Dorsolateral prefrontal cortex (tissue), 120 donors: ENCODE measurements at regions of chr16 and their contacts with region 1.

Region 1: DNA sequence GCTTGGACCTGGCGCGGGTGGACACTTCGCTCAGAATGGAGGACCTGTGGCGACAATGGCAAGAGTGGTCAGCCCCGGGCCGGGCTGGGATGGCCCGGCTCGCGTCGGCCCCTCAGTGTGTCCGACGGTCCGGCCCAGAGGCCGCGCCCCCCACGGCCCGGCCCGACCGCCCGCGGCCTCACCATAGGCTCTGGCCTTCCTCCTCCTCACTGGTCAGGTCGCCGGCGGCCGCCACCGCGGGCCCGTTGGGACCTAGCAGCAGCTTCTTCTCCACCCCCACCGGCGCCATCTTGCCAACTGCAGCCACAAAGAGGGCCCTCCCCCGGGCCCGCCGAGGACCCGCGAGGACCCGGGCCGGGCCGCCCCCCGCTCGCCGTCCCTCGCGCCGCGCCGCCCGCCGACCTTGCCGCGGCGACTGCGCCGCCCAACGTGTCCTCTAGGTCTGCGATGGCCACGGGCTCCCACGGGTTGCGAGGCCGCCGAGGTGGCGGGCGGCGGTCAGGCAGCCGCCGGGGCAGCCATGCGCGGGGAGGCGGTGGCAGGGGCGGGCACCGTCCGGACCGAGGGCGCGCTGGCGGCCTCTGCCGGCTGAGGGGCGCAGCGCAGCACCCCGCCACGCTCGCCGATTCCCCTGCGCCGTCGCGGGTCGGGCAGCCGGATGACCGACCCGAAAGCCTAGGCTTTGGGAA is at the start of gene DYNC1LI2:
- DNase-seq: peak; percentile 45 to 88 (median 70)
- H3K4me3 ChIP-seq: peak within 1 kb of the TSS; percentile 70 to 100 (median 96)
- H3K27ac ChIP-seq: peak within 1 kb of the TSS; percentile 35 to 98 (median 92)
- H3K27me3 ChIP-seq: no peaks in the 10 kb centered on the region
- CTCF ChIP-seq: peak in 55 of 56 donors; percentile 48 to 98 (median 80)
- total RNA-seq, gene DYNC1LI2: 181 to 428 (median 266) TPM

Region 2: DNA sequence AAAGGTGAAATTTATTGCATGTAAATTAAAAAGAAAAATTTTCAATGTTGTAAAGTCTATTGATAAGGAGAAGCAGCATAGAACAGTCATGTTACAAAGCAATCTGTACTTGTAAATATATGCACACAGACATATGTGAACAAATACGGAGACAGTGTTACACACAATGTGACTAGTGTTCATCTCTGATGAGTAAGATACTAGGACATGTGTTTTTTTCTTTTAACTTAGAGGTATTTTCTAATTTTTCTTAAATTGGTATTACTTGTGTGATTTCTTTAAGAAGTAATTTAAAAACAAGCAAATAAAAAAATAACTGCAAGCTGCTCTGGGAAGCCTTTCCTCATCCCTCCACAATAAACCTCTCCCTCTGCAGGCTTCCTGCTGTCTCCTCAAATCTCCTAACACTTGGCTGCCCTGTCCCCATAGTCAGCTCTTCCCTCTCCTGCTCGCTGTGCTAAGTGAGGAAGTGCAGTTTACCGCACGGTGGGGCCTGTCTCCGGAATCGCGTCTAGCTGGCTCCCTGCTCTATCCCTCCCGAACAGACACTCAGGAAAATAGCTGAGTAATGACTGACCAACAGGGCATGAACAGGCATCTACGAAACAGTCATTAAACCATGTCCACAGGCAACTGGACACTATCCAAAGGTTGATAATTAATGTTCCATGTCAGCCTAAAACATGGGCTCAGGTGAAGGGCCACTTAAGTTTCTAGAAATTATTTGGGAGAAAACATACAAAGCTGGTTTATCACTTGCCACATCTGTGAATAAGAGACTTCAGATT is 90.8 kb before region 1 on chr16:
- intact Hi-C with region 1: loop called (anchors 5 kb)
- DNase-seq: peak; percentile 31 to 77 (median 72)
- H3K4me3 ChIP-seq: peak overlapping the region in 22 of 59 donors; percentile 0 to 39 (median 12)
- H3K27ac ChIP-seq: peak overlapping the region in 57 of 59 donors; percentile 7 to 89 (median 78)
- H3K27me3 ChIP-seq: no peaks in the 10 kb centered on the region
- CTCF ChIP-seq: peak in 43 of 56 donors; percentile 12 to 55 (median 33)

Region 3: DNA sequence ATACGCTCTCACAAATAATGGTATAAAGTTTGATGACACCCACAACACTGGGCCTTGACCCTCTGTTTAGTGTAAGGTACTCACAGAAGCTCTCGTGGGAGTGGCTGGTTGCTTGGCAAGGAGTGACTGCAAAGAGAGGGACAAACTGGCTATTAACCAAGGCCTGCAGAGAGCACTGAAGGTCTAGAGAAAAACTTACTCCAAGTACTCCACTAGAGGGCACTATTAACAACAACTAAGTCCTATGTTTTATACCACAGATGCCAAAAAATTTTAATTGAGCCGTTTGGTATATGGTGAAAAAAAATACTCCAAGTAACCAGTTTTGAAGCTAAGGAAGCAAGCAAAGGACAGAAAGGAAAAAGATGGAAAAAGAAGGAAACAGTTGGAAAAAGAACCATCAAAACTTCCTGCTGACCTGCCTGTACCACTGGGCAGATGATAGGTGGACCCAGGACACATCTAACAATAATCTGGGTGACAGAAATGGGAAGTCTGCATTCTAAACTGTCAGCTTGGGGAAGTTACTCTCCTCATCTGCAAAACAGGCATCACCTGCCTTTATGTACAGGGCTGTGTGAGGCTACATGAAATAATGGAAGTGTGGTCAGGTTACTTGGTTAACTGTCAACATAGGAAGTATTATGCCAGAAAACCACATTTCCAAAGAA is 23.2 kb before region 1 on chr16:
- intact Hi-C with region 1: loop called in 1 of 2 experiments (anchors 2 kb)
- DNase-seq: peak in 1 of 10 donors; percentile 45
- H3K4me3 ChIP-seq: no peak overlapping the region
- H3K27ac ChIP-seq: peak overlapping the region in 53 of 59 donors; percentile 4 to 80 (median 59)
- H3K27me3 ChIP-seq: no peaks in the 10 kb centered on the region
- CTCF ChIP-seq: peak; percentile 67 to 92 (median 82)

Region 4: GRCh38 chr16:66740010-66740409 is 11.4 kb before region 1 on chr16:
- intact Hi-C with region 1: loop called in 1 of 2 experiments (anchors 1 kb)
- DNase-seq: peak in 1 of 10 donors; percentile 47
- H3K4me3 ChIP-seq: peak overlapping the region in 16 of 59 donors; percentile 2 to 40 (median 21)
- H3K27ac ChIP-seq: peak overlapping the region; percentile 76 to 99 (median 96)
- H3K27me3 ChIP-seq: no peaks in the 10 kb centered on the region
- CTCF ChIP-seq: peak in 55 of 56 donors; percentile 4 to 72 (median 57)

Region 5: DNA sequence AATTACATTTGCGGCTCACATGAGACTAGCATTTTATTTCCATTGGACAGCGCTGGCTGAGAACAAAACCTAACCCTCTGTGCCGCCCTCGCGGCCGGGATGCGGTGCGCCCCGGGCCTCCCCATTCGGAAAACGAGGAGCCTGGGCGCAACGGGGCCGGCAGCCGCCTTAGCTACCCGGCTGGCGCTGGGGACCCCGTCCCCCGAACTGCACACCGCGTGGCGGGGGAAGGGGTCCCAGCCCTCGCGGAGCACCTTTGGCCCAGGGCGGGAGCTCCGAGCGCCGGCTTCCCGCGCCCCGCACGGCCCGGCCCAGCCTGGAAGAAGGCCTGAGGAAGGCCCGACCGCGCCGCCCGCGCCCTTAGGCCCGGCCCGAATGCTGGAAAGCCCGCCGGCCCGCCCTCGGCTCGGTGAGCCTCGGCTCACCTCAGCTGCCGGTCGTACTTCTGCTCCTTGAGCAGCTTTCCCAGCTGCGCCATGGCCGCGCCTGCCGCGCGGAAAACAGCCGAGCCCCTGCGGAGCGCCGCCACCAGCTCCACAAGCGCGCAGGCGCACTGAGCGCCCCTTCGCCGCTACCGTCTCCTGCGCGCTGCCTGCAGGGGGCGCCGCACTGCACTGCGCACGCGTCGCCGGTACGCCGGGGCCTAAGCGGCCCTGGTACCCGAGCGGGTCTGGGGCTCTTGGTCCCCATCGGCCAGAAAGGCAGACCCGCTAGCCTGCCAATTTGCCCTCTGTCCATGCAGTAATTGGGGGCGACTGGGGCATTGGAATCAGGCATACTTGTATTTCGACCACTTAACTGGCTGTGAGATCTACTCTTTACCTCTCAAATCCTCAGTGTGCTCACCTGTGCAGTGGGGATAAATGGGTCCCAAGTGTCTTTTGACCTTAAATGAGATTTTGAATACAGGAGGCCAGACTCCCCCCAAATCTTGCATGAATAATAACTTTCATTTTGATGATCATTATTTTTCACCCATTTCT is 79.3 kb after region 1 on chr16 and contains the start of gene NAE1:
- intact Hi-C with region 1: loop called in 1 of 2 experiments (anchors 5 kb)
- DNase-seq: peak; percentile 61 to 92 (median 77)
- H3K4me3 ChIP-seq: peak within 1 kb of the TSS; percentile 40 to 99 (median 90)
- H3K27ac ChIP-seq: peak within 1 kb of the TSS in 58 of 59 donors; percentile 35 to 96 (median 89)
- H3K27me3 ChIP-seq: no peaks in the 10 kb centered on the region
- CTCF ChIP-seq: peak; percentile 57 to 99 (median 95)
- total RNA-seq, gene NAE1: 42.3 to 101 (median 76.7) TPM

Region 6: DNA sequence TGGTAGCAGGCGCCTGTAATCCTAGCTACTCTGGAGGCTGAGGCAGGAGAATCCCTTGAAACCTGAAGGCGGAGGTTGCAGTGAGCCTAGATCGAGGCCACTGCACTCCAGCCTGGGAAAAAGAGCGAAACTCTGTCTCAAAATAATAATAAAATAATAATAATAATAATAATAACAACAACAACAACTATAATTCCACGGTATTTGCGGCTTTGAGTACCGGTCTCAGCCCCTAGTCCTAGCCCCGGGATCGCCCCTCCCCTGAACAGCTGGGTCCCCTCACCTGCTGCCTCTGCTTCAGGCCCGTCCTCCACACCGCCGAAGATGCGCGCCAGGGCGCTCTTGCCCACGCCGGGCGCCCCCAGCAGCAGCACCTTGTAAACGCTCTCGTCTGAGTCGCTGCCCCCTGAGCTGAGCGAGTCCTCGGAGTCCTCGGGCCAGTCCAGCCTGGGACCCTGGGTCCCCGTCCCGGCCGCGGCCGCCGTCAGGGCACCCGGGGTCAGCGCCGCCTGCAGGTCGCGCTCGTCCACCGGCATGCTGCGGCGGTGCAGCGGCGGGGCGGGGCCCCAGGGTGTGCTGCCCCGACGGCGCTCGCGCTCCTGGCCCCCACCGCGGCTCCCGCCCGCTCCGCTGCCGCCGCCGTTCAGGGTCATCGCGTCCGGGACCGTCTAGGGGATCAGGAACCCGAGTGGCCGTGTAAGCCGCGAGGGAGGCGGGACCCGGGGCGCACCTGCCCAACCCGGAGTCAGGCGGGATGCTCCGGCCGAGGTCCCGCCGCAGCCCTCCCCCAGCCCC is 173.3 kb after region 1 on chr16:
- intact Hi-C with region 1: no loop called
- DNase-seq: no peak
- H3K4me3 ChIP-seq: peak overlapping the region; percentile 21 to 70 (median 49)
- H3K27ac ChIP-seq: peak overlapping the region in 24 of 59 donors; percentile 8 to 74 (median 54)
- H3K27me3 ChIP-seq: peaks cover 0 to 28% (median 7%) of the 10 kb centered on the region in 45 donors
- CTCF ChIP-seq: peak in 12 of 56 donors; percentile 8 to 54 (median 23)